ENCODE measurements at regions of chr2 and their contacts with region 1.

Region 1: DNA sequence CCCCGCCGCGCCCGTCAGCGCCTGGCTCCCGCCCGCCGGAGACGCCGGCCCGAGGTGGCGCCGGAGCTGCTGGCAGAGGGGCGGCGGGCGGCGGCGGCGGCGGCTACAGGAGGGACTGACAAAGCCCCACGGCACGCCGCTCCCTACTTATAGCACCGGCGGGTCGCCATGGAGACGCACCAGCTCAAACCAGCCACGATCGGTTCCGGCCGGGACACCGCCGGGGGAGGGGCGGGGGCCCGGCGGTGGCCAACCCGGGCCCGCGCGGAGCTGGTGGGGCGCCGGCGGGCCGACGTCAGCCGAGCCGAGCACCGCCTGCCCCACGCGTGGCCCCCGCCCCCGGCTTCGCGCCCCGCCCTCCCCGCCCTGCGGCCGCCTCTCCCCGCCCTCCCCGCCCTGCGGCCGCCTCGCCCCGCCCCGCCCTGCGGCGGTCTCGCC is at the start of gene ODC1:
- DNase-seq: peak; percentile 98
- ATAC-seq: peak; percentile 80
- H3K4me3 ChIP-seq: peak within 1 kb of the TSS; percentile 58 to 87 (median 63)
- H3K4me3 Mint-ChIP-seq: peak within 1 kb of the TSS; percentile 91
- H3K27ac ChIP-seq: peak within 1 kb of the TSS; percentile 94 to 97
- H3K27ac Mint-ChIP-seq: peak within 1 kb of the TSS; percentile 85
- H3K4me1 ChIP-seq: peaks cover 44 to 55% of the 10 kb centered on the region in 2 donors
- H3K4me1 Mint-ChIP-seq: peaks cover 38% of the 10 kb centered on the region
- H3K27me3 ChIP-seq: no peaks in the 10 kb centered on the region
- H3K27me3 Mint-ChIP-seq: no peaks in the 10 kb centered on the region
- CTCF ChIP-seq: no peak
- total RNA-seq, gene ODC1: 88.7 and 92.1 TPM in 2 replicates

Region 2: DNA sequence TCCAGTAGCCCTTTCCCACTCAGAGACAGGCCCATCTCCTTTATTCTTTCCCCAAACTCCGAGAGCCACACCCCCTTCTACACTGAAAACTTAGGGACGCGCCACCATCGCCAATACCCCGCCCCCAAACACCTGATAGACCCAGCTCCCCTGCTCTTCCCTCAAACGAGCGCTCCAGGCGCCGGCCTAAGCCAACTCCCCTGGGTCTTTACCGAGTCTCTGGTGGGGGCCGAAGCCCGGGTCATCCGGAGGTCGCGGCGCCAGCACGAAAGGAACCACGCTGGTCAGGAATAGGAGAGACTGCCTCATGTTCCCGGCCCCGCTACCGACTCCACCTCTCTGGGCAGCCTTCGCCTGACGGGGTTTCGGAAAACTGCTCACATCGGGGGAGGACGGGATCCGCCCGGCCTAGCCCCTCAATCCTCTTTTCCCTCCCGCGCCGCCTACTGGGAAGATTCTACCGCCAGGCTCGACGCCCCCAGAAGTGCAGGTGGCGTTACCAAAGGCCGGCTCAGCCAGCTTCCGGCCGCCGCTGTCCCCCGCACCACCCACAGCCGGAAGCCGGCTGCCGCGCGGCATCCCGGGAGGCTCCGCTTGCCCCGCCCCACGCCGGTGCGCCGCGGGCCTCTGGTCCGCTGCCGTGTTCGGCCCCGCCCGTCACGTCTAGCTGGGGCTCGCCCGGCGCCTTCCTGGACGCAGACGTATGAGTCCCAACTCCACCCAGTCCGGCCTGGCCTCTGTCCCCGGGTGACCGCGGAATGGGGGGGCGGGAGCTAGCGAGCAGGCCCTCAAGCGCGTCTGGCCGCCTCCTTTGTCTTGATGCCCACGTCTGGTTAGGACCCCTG is 892.7 kb before region 1 on chr2 and contains the start of gene ADAM17:
- CTCF ChIA-PET with region 1: no interaction called
- POLR2A ChIA-PET with region 1: no interaction called
- intact Hi-C with region 1: loop called (anchors 5 kb)
- DNase-seq: peak; percentile 94
- ATAC-seq: peak; percentile 91
- H3K4me3 ChIP-seq: peak within 1 kb of the TSS; percentile 74 to 99 (median 98)
- H3K4me3 Mint-ChIP-seq: peak within 1 kb of the TSS; percentile 98
- H3K27ac ChIP-seq: peak within 1 kb of the TSS; percentile 92 to 93
- H3K27ac Mint-ChIP-seq: peak within 1 kb of the TSS; percentile 99
- H3K4me1 ChIP-seq: peaks cover 41 to 44% of the 10 kb centered on the region in 2 donors
- H3K4me1 Mint-ChIP-seq: peaks cover 47% of the 10 kb centered on the region
- H3K27me3 ChIP-seq: no peaks in the 10 kb centered on the region
- H3K27me3 Mint-ChIP-seq: no peaks in the 10 kb centered on the region
- CTCF ChIP-seq: peak; percentile 33
- total RNA-seq, gene ADAM17: 57.8 and 60.5 TPM in 2 replicates

Region 3: DNA sequence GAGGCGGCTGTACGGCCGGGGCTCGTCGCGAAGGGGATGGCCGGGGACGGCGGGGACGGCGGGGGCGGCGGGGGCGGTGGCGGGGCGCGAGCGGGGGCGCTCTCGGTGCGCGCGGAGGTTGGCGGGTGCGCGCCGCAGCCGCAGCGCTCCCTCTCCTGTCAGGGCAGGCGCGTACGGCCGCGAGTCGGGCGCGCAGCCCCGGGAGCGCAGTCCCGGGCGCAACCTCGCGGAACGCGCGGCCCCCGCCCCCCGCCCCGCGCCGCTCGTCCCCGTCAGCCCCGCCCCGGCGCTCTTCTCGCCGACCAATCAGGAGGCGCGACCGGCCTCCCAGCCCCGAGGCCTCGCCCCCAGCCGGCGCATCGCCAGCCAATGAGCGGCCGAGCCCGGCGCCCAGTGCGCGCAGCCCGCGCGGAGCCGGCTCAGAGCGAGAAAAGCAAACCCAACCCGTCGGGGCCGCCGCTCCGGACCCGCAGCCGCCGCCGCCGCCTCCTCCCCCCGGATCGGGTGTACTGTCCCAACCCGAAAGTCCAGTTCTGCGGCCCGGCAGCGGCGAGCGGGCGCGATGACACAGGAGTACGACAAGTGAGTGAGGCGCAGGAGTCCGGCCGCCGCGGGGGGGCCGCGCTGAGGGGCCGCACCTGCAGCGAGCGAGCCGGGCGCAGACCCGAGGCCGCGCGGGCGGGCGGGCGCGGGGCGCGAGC is 496.8 kb before region 1 on chr2 and contains the start of gene GRHL1:
- CTCF ChIA-PET with region 1: no interaction called
- POLR2A ChIA-PET with region 1: no interaction called
- intact Hi-C with region 1: loop called (anchors 1 kb)
- DNase-seq: peak; percentile 94
- ATAC-seq: peak; percentile 96
- H3K4me3 ChIP-seq: peak within 1 kb of the TSS in 4 of 5 experiments; percentile 51 to 69 (median 62)
- H3K4me3 Mint-ChIP-seq: peak within 1 kb of the TSS; percentile 89
- H3K27ac ChIP-seq: peak within 1 kb of the TSS in 1 of 2 donors; percentile 45
- H3K27ac Mint-ChIP-seq: peak within 1 kb of the TSS; percentile 68
- H3K4me1 ChIP-seq: peaks cover 14 to 19% of the 10 kb centered on the region in 2 donors
- H3K4me1 Mint-ChIP-seq: peaks cover 14% of the 10 kb centered on the region
- H3K27me3 ChIP-seq: peaks cover 0 to 41% (median 20%) of the 10 kb centered on the region in 4 experiments
- H3K27me3 Mint-ChIP-seq: peaks cover 44% of the 10 kb centered on the region
- CTCF ChIP-seq: no peak
- total RNA-seq, gene GRHL1: 0.70 and 0.76 TPM in 2 replicates

Region 4: DNA sequence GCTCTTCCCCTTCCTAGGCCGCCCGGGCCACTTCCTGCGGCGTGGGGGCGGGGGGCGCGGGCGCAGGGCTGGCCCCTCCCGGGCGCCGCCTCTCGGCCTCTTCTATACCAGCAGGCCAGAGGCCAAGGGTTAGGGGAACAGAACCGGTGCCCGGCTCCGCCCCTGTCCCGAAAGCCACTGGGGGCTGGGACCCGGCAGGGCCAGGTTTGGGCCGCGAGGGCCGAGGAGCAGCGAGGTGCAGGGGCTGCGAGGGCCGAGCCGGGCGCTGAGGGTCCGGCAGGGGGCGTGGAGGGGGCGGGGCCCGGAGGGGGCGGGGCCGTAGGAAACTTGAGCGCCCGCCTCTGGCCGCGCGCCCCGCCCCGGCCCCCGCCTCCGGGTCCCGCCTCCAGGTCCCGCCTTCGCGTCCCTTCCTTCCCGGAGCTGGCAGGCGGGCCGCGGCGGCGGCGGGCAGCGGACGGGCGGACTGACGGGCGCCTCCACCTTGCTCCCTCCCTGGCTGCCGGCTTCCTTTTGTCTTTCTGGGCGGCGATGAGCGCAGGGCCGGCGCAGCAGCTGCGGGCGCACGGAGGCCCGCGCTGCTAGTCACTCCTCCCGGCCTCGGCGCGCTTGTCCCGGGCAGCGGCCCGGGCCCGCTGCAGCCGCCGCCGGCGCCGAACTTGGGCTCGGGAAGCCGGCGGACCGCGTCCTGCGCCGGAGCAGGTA is 145.6 kb before region 1 on chr2 and contains the start of gene HPCAL1:
- CTCF ChIA-PET with region 1: interaction called, 7 read pairs
- POLR2A ChIA-PET with region 1: interaction called, 8 read pairs
- intact Hi-C with region 1: loop called (anchors 1 kb)
- DNase-seq: peak; percentile 90
- ATAC-seq: peak; percentile 81
- H3K4me3 ChIP-seq: peak within 1 kb of the TSS; percentile 67 to 78 (median 76)
- H3K4me3 Mint-ChIP-seq: peak within 1 kb of the TSS; percentile 99
- H3K27ac ChIP-seq: peak within 1 kb of the TSS; percentile 71 to 77
- H3K27ac Mint-ChIP-seq: peak within 1 kb of the TSS; percentile 88
- H3K4me1 ChIP-seq: peaks cover 39 to 51% of the 10 kb centered on the region in 2 donors
- H3K4me1 Mint-ChIP-seq: peaks cover 60% of the 10 kb centered on the region
- H3K27me3 ChIP-seq: no peaks in the 10 kb centered on the region
- H3K27me3 Mint-ChIP-seq: no peaks in the 10 kb centered on the region
- CTCF ChIP-seq: peak; percentile 80
- total RNA-seq, gene HPCAL1: 60.3 and 64.1 TPM in 2 replicates

Region 5: GRCh38 chr2:10434886-10435819 is 13.1 kb before region 1 on chr2:
- CTCF ChIA-PET with region 1: interaction called, 95 read pairs
- POLR2A ChIA-PET with region 1: interaction called, 7 read pairs
- intact Hi-C with region 1: no loop called
- DNase-seq: peak; percentile 88
- ATAC-seq: peak; percentile 79
- H3K4me3 ChIP-seq: no peak overlapping the region
- H3K4me3 Mint-ChIP-seq: no peak overlapping the region
- H3K27ac ChIP-seq: no peak overlapping the region
- H3K27ac Mint-ChIP-seq: peak overlapping the region; percentile 74
- H3K4me1 ChIP-seq: peaks cover 12 to 18% of the 10 kb centered on the region in 2 donors
- H3K4me1 Mint-ChIP-seq: peaks cover 19% of the 10 kb centered on the region
- H3K27me3 ChIP-seq: peaks cover 0 to 4% (median 0%) of the 10 kb centered on the region in 4 experiments
- H3K27me3 Mint-ChIP-seq: no peaks in the 10 kb centered on the region
- CTCF ChIP-seq: peak; percentile 93

Region 6: DNA sequence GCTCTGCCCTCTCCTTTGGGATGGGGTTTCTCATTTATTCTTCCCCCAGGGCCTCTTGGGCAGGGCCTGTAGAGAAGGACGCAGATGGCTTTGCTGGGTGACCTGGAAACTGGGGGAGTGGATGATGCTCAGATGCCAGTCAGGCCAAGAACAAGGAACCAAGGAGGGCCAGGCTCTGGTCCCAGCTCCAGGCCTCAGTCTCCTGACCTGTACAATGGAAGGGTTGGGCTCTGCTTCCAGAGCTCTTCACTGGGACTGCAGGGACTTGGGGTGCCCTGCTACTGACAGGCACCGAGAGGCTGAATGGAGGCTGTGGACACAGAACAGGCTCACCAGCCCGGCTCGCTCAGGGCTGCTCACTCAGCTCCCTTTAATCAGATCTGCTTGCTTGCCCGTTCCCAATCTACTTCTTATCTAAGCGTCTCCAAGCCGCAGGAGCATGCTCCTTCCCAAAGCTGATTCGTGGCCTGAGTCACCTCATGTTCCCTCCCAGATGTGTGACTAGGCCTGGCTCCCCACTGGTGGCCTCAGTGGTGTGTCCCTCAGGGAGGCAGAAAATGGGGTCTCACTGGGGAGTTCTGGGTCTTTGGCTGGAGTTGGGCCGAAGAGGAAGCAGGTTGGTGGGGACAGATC is 82.5 kb after region 1 on chr2:
- CTCF ChIA-PET with region 1: no interaction called
- POLR2A ChIA-PET with region 1: no interaction called
- intact Hi-C with region 1: no loop called
- DNase-seq: no peak
- ATAC-seq: no peak
- H3K4me3 ChIP-seq: no peak overlapping the region
- H3K4me3 Mint-ChIP-seq: no peak overlapping the region
- H3K27ac ChIP-seq: no peak overlapping the region
- H3K27ac Mint-ChIP-seq: no peak overlapping the region
- H3K4me1 ChIP-seq: no peaks in the 10 kb centered on the region
- H3K4me1 Mint-ChIP-seq: no peaks in the 10 kb centered on the region
- H3K27me3 ChIP-seq: peaks cover 0 to 3% (median 0%) of the 10 kb centered on the region in 4 experiments
- H3K27me3 Mint-ChIP-seq: peaks cover 8% of the 10 kb centered on the region
- CTCF ChIP-seq: no peak

Region 7: DNA sequence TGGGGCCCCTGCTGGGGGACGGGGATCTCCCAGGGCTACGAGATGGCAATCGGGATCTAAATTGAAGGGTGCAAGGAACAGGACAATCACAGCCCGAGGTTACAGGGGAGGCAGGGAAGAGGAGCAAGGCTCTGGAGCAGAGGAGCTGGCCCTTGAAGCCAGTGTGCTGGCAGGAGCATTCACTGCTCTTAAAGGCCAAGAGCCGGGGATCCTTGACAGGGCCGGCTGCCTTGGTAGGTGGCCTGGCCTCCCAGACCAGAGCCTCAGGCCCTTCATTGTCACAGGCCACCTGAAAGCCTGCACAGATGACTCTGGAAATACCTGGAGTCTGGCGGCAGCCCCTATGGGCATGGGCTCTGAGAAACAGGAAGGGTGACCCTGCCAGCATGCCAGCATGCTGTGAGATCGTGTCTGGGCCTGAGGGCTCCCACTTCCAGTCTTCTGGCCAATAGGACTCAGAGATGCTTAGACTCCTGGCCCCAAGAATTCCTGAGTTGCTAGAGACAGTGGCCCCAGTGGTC is 325.7 kb after region 1 on chr2:
- CTCF ChIA-PET with region 1: no interaction called
- POLR2A ChIA-PET with region 1: no interaction called
- intact Hi-C with region 1: no loop called
- DNase-seq: no peak
- ATAC-seq: no peak
- H3K4me3 ChIP-seq: no peak overlapping the region
- H3K4me3 Mint-ChIP-seq: no peak overlapping the region
- H3K27ac ChIP-seq: no peak overlapping the region
- H3K27ac Mint-ChIP-seq: no peak overlapping the region
- H3K4me1 ChIP-seq: no peaks in the 10 kb centered on the region
- H3K4me1 Mint-ChIP-seq: no peaks in the 10 kb centered on the region
- H3K27me3 ChIP-seq: no peaks in the 10 kb centered on the region
- H3K27me3 Mint-ChIP-seq: no peaks in the 10 kb centered on the region
- CTCF ChIP-seq: no peak

Region 8: GRCh38 chr2:10812362-10813162 is 364.3 kb after region 1 on chr2 and contains the start of gene PDIA6:
- CTCF ChIA-PET with region 1: no interaction called
- POLR2A ChIA-PET with region 1: no interaction called
- intact Hi-C with region 1: loop called (anchors 2 kb)
- DNase-seq: peak; percentile 97
- ATAC-seq: peak; percentile 86
- H3K4me3 ChIP-seq: peak within 1 kb of the TSS; percentile 62 to 97 (median 72)
- H3K4me3 Mint-ChIP-seq: peak within 1 kb of the TSS; percentile 92
- H3K27ac ChIP-seq: peak within 1 kb of the TSS; percentile 71 to 80
- H3K27ac Mint-ChIP-seq: peak within 1 kb of the TSS; percentile 93
- H3K4me1 ChIP-seq: peaks cover 30 to 40% of the 10 kb centered on the region in 2 donors
- H3K4me1 Mint-ChIP-seq: peaks cover 39% of the 10 kb centered on the region
- H3K27me3 ChIP-seq: no peaks in the 10 kb centered on the region
- H3K27me3 Mint-ChIP-seq: no peaks in the 10 kb centered on the region
- CTCF ChIP-seq: no peak
- total RNA-seq, gene PDIA6: 47.9 and 53.8 TPM in 2 replicates

Region 9: DNA sequence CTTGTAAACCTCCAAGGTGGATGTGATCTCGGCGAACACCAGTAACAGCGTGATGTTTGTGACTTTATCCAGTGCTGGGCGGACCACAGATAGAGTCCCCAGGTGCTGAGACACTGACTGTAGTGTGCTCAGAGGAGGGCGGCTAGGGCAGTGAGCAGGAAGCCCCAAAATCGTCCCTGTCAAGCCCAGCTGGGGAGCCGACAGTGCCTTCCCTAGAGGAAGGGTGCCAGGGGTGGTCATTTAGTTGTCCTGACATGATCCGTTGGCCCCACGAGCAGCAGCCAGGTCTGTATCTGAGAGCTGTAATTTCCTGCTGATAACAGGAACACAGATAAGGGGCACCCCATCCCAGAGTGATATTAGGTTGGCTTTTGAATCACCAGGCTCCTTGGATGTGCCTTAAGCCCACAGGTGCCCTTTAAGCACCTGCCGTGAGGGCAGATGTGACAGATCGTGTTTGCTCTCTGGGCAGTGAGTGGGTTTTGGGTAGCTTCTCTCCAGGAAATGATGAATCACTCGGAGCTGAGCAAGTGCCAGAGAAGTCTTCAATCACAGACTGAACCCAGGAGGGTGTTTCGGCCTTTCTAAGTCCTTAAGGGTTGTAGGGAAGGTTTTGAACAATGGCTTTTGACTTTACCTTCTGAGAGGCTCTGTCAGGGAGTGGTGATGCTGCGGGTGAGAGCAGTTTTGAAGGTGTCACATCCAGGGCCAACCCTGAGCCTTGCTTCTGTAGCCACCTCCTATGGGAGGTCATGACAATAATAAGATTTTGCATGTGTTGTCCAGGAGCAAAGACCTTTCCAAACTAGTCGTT is 1305.9 kb after region 1 on chr2:
- CTCF ChIA-PET with region 1: no interaction called
- POLR2A ChIA-PET with region 1: no interaction called
- intact Hi-C with region 1: loop called (anchors 10 kb)
- DNase-seq: no peak
- ATAC-seq: peak; percentile 40
- H3K4me3 ChIP-seq: peak overlapping the region; percentile 6 to 58 (median 46)
- H3K4me3 Mint-ChIP-seq: peak overlapping the region; percentile 94
- H3K27ac ChIP-seq: peak overlapping the region; percentile 71 to 89
- H3K27ac Mint-ChIP-seq: peak overlapping the region; percentile 98
- H3K4me1 ChIP-seq: peaks cover 70 to 94% of the 10 kb centered on the region in 2 donors
- H3K4me1 Mint-ChIP-seq: peaks cover 88% of the 10 kb centered on the region
- H3K27me3 ChIP-seq: no peaks in the 10 kb centered on the region
- H3K27me3 Mint-ChIP-seq: no peaks in the 10 kb centered on the region
- CTCF ChIP-seq: no peak

Measured in B cell (primary cell).